ENCODE measurements at regions of chr5 and their contacts with region 1.

Region 1: DNA sequence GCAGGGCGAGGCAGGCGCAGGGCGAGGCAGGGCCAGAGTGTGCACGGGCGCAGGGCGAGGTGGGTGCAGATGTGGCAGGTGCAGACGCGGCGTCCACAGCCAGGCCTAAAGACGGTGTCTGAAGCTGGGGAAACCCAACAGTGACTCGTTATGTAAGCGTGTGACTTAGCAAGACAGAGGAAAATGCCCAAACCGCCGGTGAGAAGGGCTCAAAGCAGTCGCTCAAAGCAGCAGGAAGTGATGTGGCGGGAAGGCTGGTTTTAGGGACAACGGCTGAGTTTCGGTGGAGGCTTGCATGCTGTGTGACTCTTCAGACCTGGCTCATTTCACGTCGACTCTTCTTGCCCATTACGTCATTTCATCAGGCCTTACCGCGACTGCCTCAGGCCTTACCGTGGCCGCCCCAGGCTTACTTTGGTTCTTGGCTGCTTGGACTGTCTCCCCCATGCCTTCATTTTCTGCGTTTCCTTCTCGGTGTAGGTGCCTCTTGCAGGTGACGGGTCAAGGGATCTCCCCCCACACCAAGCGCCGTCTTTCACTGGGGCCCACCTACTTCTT is 50.5 kb upstream of the EXOC3 start:
- DNase-seq: peak; percentile 96
- ATAC-seq: peak; percentile 89
- H3K4me3 Mint-ChIP-seq: peak overlapping the region; percentile 76
- H3K27ac Mint-ChIP-seq: peak overlapping the region; percentile 98
- H3K4me1 Mint-ChIP-seq: peaks cover 67% of the 10 kb centered on the region
- H3K27me3 Mint-ChIP-seq: no peaks in the 10 kb centered on the region

Region 2: DNA sequence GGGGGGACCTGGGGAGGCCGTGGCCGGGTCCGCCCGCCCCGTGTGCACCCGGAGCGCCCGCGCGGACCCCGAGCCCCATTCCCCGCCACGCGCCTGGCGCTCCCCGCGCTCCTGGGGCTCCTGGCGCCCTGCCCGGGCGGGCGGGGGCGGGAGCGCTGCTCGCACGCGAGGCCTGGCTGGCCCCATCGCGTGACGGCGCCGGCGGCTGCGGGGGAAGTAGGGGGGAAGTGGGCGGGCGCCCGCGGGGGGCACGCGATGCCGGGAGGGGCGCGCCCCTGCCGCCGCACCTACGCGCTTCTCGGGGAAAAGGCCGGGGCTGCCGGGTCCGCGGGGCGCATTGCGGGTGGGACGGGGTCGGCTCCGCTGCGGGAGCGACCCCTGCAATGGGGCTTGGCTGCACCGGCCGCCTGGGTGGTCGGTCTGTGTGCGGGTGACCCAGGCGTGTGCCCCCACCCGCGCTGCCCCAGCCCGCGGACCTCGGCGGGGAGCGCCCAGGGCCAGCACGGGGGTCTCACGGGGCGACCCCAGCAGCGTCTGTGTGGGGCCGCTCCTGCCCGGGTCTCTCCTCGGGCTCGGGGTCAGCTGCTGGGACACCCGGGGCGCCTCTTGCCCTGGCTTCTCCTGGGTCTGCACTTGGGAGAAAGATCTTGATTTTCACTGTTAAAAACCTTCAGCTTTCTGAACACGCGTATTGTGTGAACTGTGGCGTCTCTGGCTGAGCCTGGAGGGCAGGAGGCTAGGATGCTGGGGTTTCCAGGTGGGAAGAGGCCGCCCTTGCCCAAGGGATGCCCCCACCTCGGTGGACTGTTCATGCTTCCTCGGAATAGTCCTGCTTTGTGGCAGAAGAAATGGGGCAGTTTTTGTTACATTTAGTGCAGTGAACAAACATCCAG is 18.6 kb before region 1 on chr5:
- CTCF ChIA-PET with region 1: interaction called, 5 read pairs
- POLR2A ChIA-PET with region 1: interaction called, 29 read pairs
- DNase-seq: peak; percentile 87
- ATAC-seq: peak; percentile 54
- H3K4me3 Mint-ChIP-seq: peak overlapping the region; percentile 70
- H3K27ac Mint-ChIP-seq: peak overlapping the region; percentile 97
- H3K4me1 Mint-ChIP-seq: peaks cover 87% of the 10 kb centered on the region
- H3K27me3 Mint-ChIP-seq: no peaks in the 10 kb centered on the region

Measured in activated CD8-positive, alpha-beta T cell treated with anti-CD3 and anti-CD28 coated beads, Interleukin-2, amount 10 ng/mL, durations not matched to agents 7 days and 5 days (primary cell).